Activated T-helper 1 cell treated with anti-CD3 and anti-CD28 coated beads, Interleukin-12 subunit alpha, Interleukin-12 subunit beta, Interleukin-2, Interleukin-4 antibody, amounts not matched to agents 30 ng/mL and 10 ng/mL and 1 ng/mL, durations not matched to agents 14 hours and 24 hours and 36 hours (primary cell): ENCODE measurements at regions of chr9 and their contacts with region 1.

Region 1: DNA sequence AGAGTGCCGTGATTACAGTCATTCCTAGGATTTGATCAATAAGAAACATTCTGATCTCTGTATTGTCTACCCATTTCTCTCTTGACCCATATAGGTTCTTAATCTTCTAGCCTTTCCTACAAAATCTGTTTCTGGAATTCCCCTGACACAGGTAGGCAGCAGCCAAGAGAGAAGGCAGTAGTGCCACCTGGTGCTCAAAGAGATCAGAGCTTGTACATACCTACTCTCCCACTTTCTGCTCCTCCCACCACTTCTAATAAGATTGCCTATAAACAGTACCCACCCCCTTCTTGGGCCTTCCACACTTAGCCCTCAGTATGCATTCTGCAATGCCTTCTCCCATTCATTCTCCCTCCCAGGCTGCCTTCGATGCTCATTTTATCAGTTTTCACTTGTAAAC is 117.4 kb upstream of the RORB start:
- DNase-seq: peak; percentile 4
- H3K4me3 Mint-ChIP-seq: no peak overlapping the region
- H3K27ac Mint-ChIP-seq: no peak overlapping the region
- H3K4me1 Mint-ChIP-seq: peaks cover 8% of the 10 kb centered on the region
- H3K27me3 Mint-ChIP-seq: no peaks in the 10 kb centered on the region

Region 2: GRCh38 chr9:73200694-73201452 is 1178.8 kb before region 1 on chr9:
- intact Hi-C with region 1: loop called (anchors 1 kb)
- DNase-seq: no peak
- H3K4me3 Mint-ChIP-seq: no peak overlapping the region
- H3K27ac Mint-ChIP-seq: no peak overlapping the region
- H3K4me1 Mint-ChIP-seq: no peaks in the 10 kb centered on the region
- H3K27me3 Mint-ChIP-seq: peaks cover 6% of the 10 kb centered on the region

Region 3: DNA sequence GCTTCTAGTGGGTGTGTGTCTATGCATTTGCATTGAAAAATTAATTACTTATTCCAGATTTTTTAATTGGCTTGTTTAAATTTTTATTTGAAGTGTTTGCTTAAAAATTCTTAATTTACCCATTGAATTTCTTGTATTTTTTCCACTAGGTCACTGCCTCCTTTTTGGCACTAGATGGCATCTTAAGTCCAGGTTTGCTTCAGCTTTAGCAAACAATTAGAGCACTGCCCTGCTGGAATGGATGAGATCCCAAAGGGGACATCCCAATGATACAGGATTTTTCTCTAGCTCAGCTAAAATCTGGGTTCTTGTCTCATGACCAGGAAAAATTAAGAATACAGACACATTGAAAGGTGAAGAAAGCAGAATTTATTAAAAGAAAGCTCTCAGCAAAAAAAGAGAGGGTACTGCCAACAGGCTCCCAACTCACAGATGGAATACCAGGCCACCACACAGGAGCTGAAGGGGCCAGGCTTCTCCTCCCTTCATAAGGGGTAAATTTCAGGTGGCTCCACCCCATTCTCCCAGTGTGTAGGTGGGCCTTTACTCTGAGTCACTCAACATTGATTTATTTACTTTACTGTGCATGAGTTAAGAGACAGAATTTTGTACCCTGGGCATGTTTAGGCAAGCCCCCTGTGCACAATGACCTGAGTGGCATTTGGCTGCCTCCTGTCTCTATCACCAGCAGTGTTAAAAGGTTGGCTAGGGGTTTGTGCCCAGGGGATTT is 695.7 kb before region 1 on chr9:
- intact Hi-C with region 1: loop called (anchors 1 kb)
- DNase-seq: no peak
- H3K4me3 Mint-ChIP-seq: no peak overlapping the region
- H3K27ac Mint-ChIP-seq: no peak overlapping the region
- H3K4me1 Mint-ChIP-seq: no peaks in the 10 kb centered on the region
- H3K27me3 Mint-ChIP-seq: no peaks in the 10 kb centered on the region

Region 4: DNA sequence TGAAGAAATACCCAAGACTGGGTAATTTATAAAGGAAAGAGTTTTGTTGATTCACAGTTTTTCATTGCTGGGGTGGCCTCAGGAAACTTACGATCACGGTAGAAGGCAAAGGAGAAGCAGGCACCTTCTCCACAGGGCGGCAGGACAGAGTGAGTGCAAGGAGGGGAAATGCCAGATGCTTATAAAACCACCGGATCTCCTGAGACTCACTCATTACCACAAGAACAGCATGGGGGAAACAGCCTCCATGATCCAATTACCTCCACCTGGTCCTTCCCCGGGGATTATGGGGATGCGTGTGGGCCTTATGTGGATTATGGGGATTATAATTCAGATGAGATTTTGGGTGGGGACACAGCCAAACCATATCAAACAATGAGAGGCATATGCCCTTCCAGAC is 98.9 kb after region 1 on chr9:
- intact Hi-C with region 1: no loop called
- DNase-seq: no peak
- H3K4me3 Mint-ChIP-seq: no peak overlapping the region
- H3K27ac Mint-ChIP-seq: no peak overlapping the region
- H3K4me1 Mint-ChIP-seq: no peaks in the 10 kb centered on the region
- H3K27me3 Mint-ChIP-seq: no peaks in the 10 kb centered on the region